Activated CD8-positive, alpha-beta T cell treated with anti-CD3 and anti-CD28 coated beads for 36 hours (primary cell): ENCODE measurements at regions of chr19 and their contacts with region 1.

Region 1: GRCh38 chr19:11035441-11036377 is 53.6 kb upstream of the LDLR start:
- DNase-seq: peak; percentile 92
- ATAC-seq: peak; percentile 97
- H3K4me3 Mint-ChIP-seq: no peak overlapping the region
- H3K27ac Mint-ChIP-seq: peak overlapping the region; percentile 10
- H3K4me1 Mint-ChIP-seq: peaks cover 5% of the 10 kb centered on the region
- H3K27me3 Mint-ChIP-seq: no peaks in the 10 kb centered on the region
- CTCF ChIP-seq: peak; percentile 85

Region 2: GRCh38 chr19:10960314-10961072 is 75.2 kb before region 1 on chr19 and contains the start of gene SMARCA4:
- CTCF ChIA-PET with region 1: no interaction called
- POLR2A ChIA-PET with region 1: no interaction called
- intact Hi-C with region 1: no loop called
- DNase-seq: peak; percentile 97
- ATAC-seq: peak; percentile 82
- H3K4me3 Mint-ChIP-seq: peak within 1 kb of the TSS; percentile 89
- H3K27ac Mint-ChIP-seq: peak within 1 kb of the TSS; percentile 91
- H3K4me1 Mint-ChIP-seq: peaks cover 34% of the 10 kb centered on the region
- H3K27me3 Mint-ChIP-seq: no peaks in the 10 kb centered on the region
- CTCF ChIP-seq: no peak
- total RNA-seq, gene SMARCA4: 97.0 to 98.7 TPM

Region 3: DNA sequence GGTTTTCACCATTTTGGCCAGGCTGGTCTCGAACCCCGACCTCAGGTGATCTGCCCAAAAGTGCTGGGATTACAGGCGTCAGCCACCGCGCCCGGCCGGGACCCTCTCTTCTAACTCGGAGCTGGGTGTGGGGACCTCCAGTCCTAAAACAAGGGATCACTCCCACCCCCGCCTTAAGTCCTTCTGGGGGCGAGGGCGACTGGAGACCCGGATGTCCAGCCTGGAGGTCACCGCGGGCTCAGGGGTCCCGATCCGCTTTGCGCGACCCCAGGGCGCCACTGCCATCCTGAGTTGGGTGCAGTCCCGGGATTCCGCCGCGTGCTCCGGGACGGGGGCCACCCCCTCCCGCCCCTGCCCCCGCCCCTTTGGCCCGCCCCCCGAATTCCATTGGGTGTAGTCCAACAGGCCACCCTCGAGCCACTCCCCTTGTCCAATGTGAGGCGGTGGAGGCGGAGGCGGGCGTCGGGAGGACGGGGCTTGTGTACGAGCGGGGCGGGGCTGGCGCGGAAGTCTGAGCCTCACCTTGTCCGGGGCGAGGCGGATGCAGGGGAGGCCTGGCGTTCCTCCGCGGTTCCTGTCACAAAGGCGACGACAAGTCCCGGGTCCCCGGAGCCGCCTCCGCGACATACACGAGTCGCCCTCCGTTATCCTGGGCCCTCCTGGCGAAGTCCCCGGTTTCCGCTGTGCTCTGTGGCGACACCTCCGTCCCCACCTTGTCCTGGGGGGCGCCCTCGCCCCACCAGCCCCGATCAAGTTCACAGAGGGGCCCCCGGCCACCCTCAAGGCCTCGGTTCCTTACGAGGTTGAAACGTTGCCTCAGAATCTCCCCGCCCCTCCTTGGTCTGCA is 54.6 kb after region 1 on chr19:
- CTCF ChIA-PET with region 1: interaction called, 27 read pairs
- POLR2A ChIA-PET with region 1: interaction called, 17 read pairs
- intact Hi-C with region 1: no loop called
- DNase-seq: peak; percentile 99
- ATAC-seq: peak; percentile 89
- H3K4me3 Mint-ChIP-seq: peak overlapping the region; percentile 92
- H3K27ac Mint-ChIP-seq: peak overlapping the region; percentile 98
- H3K4me1 Mint-ChIP-seq: peaks cover 46% of the 10 kb centered on the region
- H3K27me3 Mint-ChIP-seq: no peaks in the 10 kb centered on the region
- CTCF ChIP-seq: no peak

Region 4: GRCh38 chr19:11096210-11096841 is 60.6 kb after region 1 on chr19:
- CTCF ChIA-PET with region 1: interaction called, 27 read pairs
- POLR2A ChIA-PET with region 1: interaction called, 17 read pairs
- intact Hi-C with region 1: no loop called
- DNase-seq: peak; percentile 57
- ATAC-seq: peak; percentile 55
- H3K4me3 Mint-ChIP-seq: peak overlapping the region; percentile 63
- H3K27ac Mint-ChIP-seq: peak overlapping the region; percentile 94
- H3K4me1 Mint-ChIP-seq: peaks cover 54% of the 10 kb centered on the region
- H3K27me3 Mint-ChIP-seq: no peaks in the 10 kb centered on the region
- CTCF ChIP-seq: no peak